IMR-90 (cell line): ENCODE measurements at regions of chr6 and their contacts with region 1.

Region 1: DNA sequence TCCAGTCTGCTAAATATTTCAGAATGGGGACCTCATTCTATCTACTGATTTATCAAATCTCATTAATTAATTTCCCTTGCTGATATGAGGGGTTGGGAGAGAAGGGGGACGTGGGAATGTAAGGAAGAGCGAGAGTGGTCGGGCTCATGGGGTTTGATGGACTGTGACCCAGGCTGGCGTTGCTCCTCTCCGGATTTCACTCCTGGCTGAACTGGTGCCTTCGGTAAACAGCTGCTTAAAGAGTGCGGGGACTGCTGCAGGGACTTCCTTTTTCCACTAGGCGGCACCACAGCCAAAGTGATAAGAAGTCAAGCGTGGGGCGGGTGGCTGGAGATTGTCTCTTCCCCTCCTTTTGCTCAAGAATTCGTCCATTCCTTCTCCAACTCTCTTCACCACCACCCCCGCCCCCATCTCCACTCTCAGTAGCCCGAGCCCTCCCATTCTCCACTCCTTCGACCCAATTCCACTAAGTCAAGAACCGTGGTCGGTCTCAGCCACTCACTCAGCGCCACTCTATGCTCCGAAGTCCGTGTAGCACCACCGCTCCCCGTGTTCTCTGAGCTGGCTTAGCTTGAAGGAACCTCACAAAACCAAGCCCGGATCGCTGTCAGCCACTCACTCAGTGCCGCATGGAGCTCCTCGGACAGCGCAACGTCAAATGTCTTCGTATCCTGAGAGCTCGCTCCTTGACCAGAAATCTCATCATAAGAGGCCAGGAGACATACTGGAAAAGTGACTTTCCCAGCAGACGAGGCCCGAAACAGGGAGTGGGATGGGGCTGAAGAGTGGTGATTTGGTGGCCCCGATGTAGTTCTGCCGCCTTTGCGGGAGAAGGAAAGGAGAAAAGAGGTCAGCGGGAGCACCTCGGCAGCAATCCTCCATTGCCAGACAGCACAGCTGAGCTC is 9.7 kb downstream of the TRIM31 start:
- DNase-seq: peak; percentile 80
- ATAC-seq: peak; percentile 77
- H3K4me3 ChIP-seq: peak overlapping the region; percentile 30
- H3K27ac ChIP-seq: no peak overlapping the region
- H3K4me1 ChIP-seq: peaks cover 6% of the 10 kb centered on the region
- H3K27me3 ChIP-seq: peaks cover 51% of the 10 kb centered on the region
- CTCF ChIP-seq: peak; percentile 94
- POLR2A ChIP-seq: peak; percentile 42; the same call in 1 of the 2 replicates
- RAD21 ChIP-seq: peak; percentile 85

Region 2: GRCh38 chr6:30066577-30067459 is 36.4 kb before region 1 on chr6 and contains the start of gene PPP1R11:
- CTCF ChIA-PET with region 1: interaction called, 3 read pairs
- POLR2A ChIA-PET with region 1: interaction called, 4 read pairs
- dilution Hi-C with region 1: no loop called
- in situ Hi-C with region 1: no loop called
- intact Hi-C with region 1: loop called (anchors 2 kb)
- DNase-seq: peak; percentile 99
- ATAC-seq: peak; percentile 99
- H3K4me3 ChIP-seq: peak within 1 kb of the TSS; percentile 74
- H3K27ac ChIP-seq: peak within 1 kb of the TSS; percentile 81
- H3K4me1 ChIP-seq: peaks cover 3% of the 10 kb centered on the region
- H3K27me3 ChIP-seq: peaks cover 10% of the 10 kb centered on the region; the same call in 1 of the 2 replicates
- CTCF ChIP-seq: no peak
- POLR2A ChIP-seq: peak; percentile 88
- RAD21 ChIP-seq: no peak
- total RNA-seq, gene PPP1R11: 15.6 and 16.7 TPM in 2 replicates

Region 3: DNA sequence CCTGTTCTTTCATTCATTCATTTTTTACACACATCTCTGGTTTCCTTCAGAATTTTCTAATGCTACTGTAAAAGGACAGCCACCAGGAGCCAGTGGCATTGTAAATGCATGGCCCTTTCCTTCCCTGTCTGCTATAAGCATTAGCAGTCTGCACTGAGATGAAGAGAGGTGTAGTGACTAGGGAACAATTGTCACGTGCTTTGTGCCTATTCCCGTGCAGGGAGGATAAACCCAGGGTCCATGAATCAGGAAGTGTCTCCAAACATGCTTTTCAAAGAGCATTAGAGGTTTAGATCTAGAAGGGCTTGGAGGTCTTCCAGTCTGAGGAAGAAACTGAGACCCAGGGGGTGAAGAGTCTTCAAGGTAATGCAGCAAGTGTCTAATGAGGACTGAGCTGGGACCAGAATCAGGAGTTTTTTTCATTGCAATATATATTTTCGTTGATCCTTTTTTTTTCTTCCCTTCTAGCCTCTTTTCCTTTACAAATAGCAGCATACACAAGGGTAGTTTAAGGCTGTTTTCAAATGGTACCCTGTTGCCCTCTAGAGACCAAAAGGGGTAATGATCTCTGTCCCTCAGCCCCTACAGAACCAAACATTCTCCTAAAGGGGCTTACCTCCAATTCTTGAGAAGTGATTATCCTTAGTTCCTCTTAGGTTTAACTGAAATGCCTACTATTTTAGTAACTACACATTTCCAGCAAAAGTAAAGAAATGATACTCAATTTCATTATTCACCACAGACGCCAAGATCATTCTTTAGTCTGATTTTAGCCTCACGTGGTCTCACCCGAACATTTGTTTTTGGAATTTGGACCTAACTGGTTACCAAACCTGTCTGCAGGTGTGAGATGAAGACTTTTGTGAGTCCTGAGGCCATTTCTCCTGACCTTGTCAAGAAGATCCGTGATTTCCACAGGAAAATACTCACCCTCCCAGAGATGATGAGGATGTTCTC is 66.7 kb after region 1 on chr6:
- CTCF ChIA-PET with region 1: no interaction called
- POLR2A ChIA-PET with region 1: no interaction called
- dilution Hi-C with region 1: no loop called
- in situ Hi-C with region 1: no loop called
- intact Hi-C with region 1: loop called (anchors 1 kb)
- DNase-seq: peak; percentile 49
- ATAC-seq: peak; percentile 96
- H3K4me3 ChIP-seq: no peak overlapping the region
- H3K27ac ChIP-seq: no peak overlapping the region
- H3K4me1 ChIP-seq: no peaks in the 10 kb centered on the region
- H3K27me3 ChIP-seq: peaks cover 55% of the 10 kb centered on the region
- CTCF ChIP-seq: peak; percentile 76
- POLR2A ChIP-seq: no peak
- RAD21 ChIP-seq: peak; percentile 71